ENCODE measurements at regions of chr6 and their contacts with region 1.

Region 1: DNA sequence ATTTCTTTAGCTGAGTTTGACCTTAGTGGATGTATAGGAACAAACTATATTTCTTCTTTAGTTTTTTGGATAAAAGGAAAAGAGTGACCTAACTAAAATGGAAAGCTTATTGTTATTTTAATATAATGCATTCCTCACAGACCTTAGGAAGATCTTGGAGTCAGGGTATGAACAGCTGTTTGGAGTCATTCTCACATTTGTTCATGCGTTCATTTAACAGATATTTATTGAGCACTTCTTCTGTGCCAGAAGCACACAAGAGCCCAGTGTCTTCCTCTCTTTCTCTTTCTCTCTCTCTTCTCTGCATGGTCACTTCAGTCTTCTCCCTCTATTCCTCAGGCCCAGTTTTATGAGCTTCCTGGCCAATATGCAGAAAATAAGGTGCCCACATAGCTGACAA is 744.0 kb upstream of the MAP3K7 start:
- H3K4me3 ChIP-seq: no peak overlapping the region
- H3K27ac ChIP-seq: no peak overlapping the region
- H3K4me1 ChIP-seq: no peaks in the 10 kb centered on the region
- CTCF ChIP-seq: no peak

Region 2: GRCh38 chr6:91352878-91353277 is 22.0 kb after region 1 on chr6:
- CTCF ChIA-PET with region 1: interaction called, 10 read pairs
- POLR2A ChIA-PET with region 1: no interaction called
- H3K4me3 ChIP-seq: no peak overlapping the region
- H3K27ac ChIP-seq: no peak overlapping the region
- H3K4me1 ChIP-seq: no peaks in the 10 kb centered on the region
- CTCF ChIP-seq: no peak